AG04449 (cell line): ENCODE measurements at regions of chr5 and their contacts with region 1.

Region 1: DNA sequence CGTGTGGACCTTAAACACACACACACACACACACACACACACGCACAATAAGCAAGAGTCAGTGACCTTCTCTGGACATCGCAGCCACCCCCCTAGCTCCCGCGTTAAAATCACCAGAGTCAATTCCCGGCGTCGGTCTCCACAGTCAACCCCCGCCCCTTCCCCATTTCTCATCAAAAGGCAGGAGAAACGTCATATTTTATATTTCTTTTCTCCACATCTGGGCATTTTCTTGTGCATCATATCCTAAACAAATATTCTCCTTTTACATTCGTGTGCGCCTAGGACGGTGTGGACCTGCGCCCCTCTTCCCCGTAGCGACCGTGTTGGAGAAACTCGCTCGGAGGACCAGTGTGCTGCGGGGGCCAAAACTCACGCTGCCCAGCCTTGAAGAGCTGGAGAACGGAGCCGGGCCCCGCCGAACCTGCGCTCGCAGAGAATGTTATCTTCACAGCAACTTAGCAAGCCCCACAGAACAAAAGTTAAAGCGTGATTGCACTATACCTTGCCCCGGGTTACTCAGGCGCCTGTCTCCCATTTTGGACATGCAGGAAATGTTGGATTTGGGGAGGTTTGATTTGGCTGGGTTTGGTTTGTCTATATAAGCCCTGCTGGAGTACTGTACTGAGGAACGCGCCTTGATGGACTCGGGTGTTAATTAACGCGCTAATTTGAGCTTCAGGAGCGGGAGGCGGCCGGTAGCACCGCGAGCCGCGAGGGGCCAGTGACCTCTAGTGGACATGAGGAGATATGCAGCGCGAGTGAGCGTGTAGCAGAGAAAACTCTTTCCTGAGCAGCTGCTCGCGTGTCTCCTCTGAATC is 192.4 kb downstream of the MEF2C start:
- DNase-seq: no peak
- H3K4me3 ChIP-seq: peak overlapping the region; percentile 40
- CTCF ChIP-seq: peak; percentile 93

Region 2: GRCh38 chr5:88551724-88552345 is 138.8 kb before region 1 on chr5:
- CTCF ChIA-PET with region 1: no interaction called
- POLR2A ChIA-PET with region 1: no interaction called
- DNase-seq: no peak
- H3K4me3 ChIP-seq: no peak overlapping the region
- CTCF ChIP-seq: no peak

Region 3: GRCh38 chr5:88680253-88681132 is 10.1 kb before region 1 on chr5:
- CTCF ChIA-PET with region 1: interaction called, 77 read pairs
- POLR2A ChIA-PET with region 1: no interaction called
- DNase-seq: no peak
- H3K4me3 ChIP-seq: peak overlapping the region; percentile 48
- CTCF ChIP-seq: peak; percentile 93

Region 4: DNA sequence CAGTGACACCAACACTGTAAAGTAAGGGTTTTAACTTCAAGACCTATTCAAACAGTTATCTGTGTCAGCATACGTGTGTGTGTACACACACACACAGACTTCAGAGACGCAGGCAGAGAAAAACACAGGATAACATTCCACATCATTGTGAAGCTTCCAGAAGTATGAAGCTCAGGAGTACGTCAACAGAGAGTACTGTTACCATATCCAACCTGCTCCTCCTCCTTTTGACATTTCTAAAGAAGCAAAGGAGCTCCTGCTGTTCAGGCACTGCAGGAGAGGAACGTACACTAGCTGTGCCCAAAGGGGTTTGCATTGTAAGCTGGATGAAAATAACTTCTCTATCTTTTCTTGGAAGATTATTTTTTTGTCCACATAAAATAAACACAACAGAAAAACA is 11.7 kb after region 1 on chr5:
- CTCF ChIA-PET with region 1: interaction called, 14 read pairs
- POLR2A ChIA-PET with region 1: no interaction called
- DNase-seq: no peak
- H3K4me3 ChIP-seq: no peak overlapping the region
- CTCF ChIP-seq: no peak